Activated T-helper 1 cell treated with anti-CD3 and anti-CD28 coated beads, Interleukin-12 subunit alpha, Interleukin-12 subunit beta, Interleukin-2, Interleukin-4 antibody, amounts not matched to agents 30 ng/mL and 10 ng/mL and 1 ng/mL, durations not matched to agents 14 hours and 24 hours and 36 hours (primary cell): ENCODE measurements at regions of chr16 and their contacts with region 1.

Region 1: GRCh38 chr16:67017810-67018488 is 11.0 kb upstream of the CBFB start:
- DNase-seq: peak; percentile 85
- H3K4me3 Mint-ChIP-seq: peak overlapping the region; percentile 7
- H3K27ac Mint-ChIP-seq: peak overlapping the region; percentile 40
- H3K4me1 Mint-ChIP-seq: peaks cover 40% of the 10 kb centered on the region
- H3K27me3 Mint-ChIP-seq: peaks cover 3% of the 10 kb centered on the region

Region 2: DNA sequence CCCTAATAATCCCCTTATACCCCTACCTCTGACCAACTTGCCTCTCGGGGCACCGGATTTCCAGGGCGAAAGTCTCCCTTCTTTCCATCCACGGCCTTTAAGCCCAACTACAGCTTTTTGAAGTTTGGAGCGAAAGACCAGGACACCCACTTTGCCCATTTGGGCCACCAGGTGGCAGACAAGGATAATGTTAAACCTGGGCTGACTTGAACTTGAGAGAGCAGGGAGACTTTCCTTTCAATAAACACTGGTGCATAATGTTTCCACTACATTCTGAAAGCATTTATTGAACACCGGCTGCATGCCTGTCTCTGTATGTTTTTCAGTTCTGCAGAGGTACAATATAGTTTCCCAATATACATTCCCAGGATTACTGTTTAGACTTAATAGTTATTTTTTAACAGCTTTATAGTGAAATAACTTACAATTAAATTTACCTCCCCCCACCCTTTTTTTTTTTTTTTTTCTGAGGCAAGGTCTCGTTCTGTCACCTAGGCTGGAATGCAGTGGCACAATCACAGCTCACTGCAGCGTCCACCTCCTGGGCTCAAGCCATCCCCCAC is 63.8 kb before region 1 on chr16:
- intact Hi-C with region 1: loop called (anchors 1 kb)
- DNase-seq: peak; percentile 71
- H3K4me3 Mint-ChIP-seq: no peak overlapping the region
- H3K27ac Mint-ChIP-seq: peak overlapping the region; percentile 18
- H3K4me1 Mint-ChIP-seq: peaks cover 30% of the 10 kb centered on the region
- H3K27me3 Mint-ChIP-seq: peaks cover 16% of the 10 kb centered on the region

Region 3: GRCh38 chr16:66988197-66988788 is 29.7 kb before region 1 on chr16 and contains the start of gene CES4A:
- intact Hi-C with region 1: loop called (anchors 1 kb)
- DNase-seq: no peak
- H3K4me3 Mint-ChIP-seq: no peak within 1 kb of the TSS
- H3K27ac Mint-ChIP-seq: peak within 1 kb of the TSS; percentile 73
- H3K4me1 Mint-ChIP-seq: peaks cover 32% of the 10 kb centered on the region
- H3K27me3 Mint-ChIP-seq: no peaks in the 10 kb centered on the region
- total RNA-seq, gene CES4A: 33.2 and 34.2 TPM in 2 replicates

Region 4: GRCh38 chr16:67028555-67029248 is 10.8 kb after region 1 on chr16 and contains the start of gene CBFB:
- intact Hi-C with region 1: loop called (anchors 1 kb)
- DNase-seq: peak; percentile 94
- H3K4me3 Mint-ChIP-seq: peak within 1 kb of the TSS; percentile 93
- H3K27ac Mint-ChIP-seq: peak within 1 kb of the TSS; percentile 94
- H3K4me1 Mint-ChIP-seq: peaks cover 61% of the 10 kb centered on the region
- H3K27me3 Mint-ChIP-seq: no peaks in the 10 kb centered on the region
- total RNA-seq, gene CBFB: 171 and 175 TPM in 2 replicates

Region 5: DNA sequence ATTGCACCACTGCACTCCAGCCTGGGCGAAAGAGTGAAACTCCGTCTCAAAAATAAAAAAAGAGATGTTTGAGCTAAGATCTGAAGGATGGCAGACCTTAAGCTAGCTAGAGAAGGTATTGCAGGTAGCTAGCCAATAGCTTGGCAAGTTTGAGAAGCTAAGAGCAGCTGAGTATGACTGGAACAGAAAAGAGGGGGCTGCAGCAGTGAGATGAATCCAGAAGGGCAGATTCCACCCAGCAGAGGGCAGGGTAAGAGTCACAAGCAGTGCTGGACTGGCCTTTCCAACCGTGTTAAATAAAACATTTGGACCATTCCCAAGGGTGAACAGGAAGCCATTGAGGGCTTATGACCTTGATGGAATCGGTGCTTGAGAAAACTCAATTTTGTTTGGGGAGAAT is 86.1 kb after region 1 on chr16:
- intact Hi-C with region 1: loop called (anchors 1 kb)
- DNase-seq: no peak
- H3K4me3 Mint-ChIP-seq: no peak overlapping the region
- H3K27ac Mint-ChIP-seq: no peak overlapping the region
- H3K4me1 Mint-ChIP-seq: peaks cover 31% of the 10 kb centered on the region
- H3K27me3 Mint-ChIP-seq: no peaks in the 10 kb centered on the region

Region 6: GRCh38 chr16:67150833-67151396 is 133.0 kb after region 1 on chr16 and contains the start of gene B3GNT9:
- intact Hi-C with region 1: loop called (anchors 1 kb)
- DNase-seq: no peak
- H3K4me3 Mint-ChIP-seq: peak within 1 kb of the TSS; percentile 79
- H3K27ac Mint-ChIP-seq: peak within 1 kb of the TSS; percentile 58
- H3K4me1 Mint-ChIP-seq: peaks cover 33% of the 10 kb centered on the region
- H3K27me3 Mint-ChIP-seq: no peaks in the 10 kb centered on the region
- total RNA-seq, gene B3GNT9: 6.2 TPM in 2 replicates